ENCODE measurements at regions of chr13 and their contacts with region 1.

Region 1: GRCh38 chr13:107211073-107211472 is 643.1 kb upstream of the ARGLU1 start:
- DNase-seq: peak; percentile 94
- H3K4me3 ChIP-seq: peak overlapping the region; percentile 22
- H3K27ac ChIP-seq: no peak overlapping the region
- H3K4me1 ChIP-seq: no peaks in the 10 kb centered on the region
- H3K27me3 ChIP-seq: no peaks in the 10 kb centered on the region
- CTCF ChIP-seq: peak; percentile 95

Region 2: DNA sequence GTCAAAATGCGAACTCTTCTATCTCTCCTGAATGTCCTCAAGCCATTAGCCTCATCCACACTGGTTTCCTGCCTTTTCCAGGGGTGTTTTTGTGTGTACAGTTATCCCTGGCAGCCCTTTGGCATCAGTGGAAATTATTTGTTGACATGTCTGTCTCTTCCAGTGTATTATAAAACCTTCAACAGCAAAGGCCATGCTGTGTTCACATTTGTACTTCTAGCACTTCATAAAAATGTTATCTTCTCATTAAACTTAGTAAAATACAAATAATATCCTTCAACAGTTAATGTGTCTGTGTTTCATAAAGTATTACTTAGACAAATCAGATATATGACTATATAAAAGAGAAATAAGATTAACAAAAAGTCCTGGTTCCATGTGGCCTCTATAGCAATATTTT is 283.7 kb before region 1 on chr13:
- CTCF ChIA-PET with region 1: no interaction called
- POLR2A ChIA-PET with region 1: no interaction called
- intact Hi-C with region 1: no loop called
- DNase-seq: no peak
- H3K4me3 ChIP-seq: no peak overlapping the region
- H3K27ac ChIP-seq: no peak overlapping the region
- H3K4me1 ChIP-seq: no peaks in the 10 kb centered on the region
- H3K27me3 ChIP-seq: no peaks in the 10 kb centered on the region
- CTCF ChIP-seq: no peak

Region 3: GRCh38 chr13:107130566-107130965 is 80.5 kb before region 1 on chr13:
- CTCF ChIA-PET with region 1: no interaction called
- POLR2A ChIA-PET with region 1: no interaction called
- intact Hi-C with region 1: no loop called
- DNase-seq: no peak
- H3K4me3 ChIP-seq: no peak overlapping the region
- H3K27ac ChIP-seq: no peak overlapping the region
- H3K4me1 ChIP-seq: no peaks in the 10 kb centered on the region
- H3K27me3 ChIP-seq: peaks cover 5% of the 10 kb centered on the region
- CTCF ChIP-seq: no peak

Region 4: DNA sequence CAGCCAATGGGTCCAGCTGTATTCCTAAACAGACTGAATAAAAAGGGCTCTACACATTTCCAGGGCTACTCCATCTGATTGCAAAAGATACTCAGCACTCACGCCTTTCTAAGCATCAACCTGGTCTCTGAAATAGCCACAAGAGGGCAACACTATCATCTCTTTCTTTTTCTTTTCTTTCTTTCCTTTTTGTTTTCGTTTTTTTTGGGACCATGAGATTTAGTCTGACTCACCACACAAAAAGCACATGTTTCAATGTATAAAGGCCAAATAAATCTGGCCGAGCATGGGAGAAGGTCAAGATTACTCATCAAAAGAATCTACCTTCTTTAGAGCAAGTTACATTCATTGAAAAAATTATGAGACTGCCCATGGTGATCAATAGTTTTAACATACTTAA is 162.5 kb after region 1 on chr13:
- CTCF ChIA-PET with region 1: no interaction called
- POLR2A ChIA-PET with region 1: no interaction called
- intact Hi-C with region 1: loop called (anchors 2 kb)
- DNase-seq: peak; percentile 59
- H3K4me3 ChIP-seq: no peak overlapping the region
- H3K27ac ChIP-seq: no peak overlapping the region
- H3K4me1 ChIP-seq: no peaks in the 10 kb centered on the region
- H3K27me3 ChIP-seq: no peaks in the 10 kb centered on the region
- CTCF ChIP-seq: peak; percentile 66

Region 5: DNA sequence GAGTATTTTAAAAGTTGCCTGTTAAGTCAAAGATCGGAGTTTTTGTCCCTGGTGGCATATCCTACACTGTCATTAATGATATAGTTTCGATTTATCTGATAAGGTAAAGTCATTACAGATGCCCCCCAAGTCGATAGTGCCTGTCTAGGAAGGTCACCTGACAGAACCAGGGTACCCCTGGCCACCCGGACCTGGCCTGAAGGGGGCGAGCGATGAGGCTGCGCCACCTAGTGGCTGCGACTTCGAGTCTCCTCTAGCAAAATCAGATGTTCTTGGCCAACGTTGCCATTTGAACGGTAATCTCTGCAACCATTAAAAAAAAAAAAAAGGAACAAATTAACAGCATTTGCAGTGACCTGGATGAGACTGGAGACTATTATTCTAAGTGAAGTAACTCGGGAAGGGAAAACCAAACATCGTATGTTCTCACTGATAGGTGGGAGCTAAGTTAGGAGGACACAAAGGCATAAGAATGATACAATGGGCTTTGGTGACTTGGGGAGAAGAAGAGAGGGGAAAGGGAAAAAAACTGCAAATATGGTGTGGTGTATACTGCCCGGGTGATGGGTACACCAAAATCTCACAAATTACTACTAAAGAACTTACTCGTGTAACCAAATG is 439.1 kb after region 1 on chr13:
- CTCF ChIA-PET with region 1: interaction called, 5 read pairs
- POLR2A ChIA-PET with region 1: no interaction called
- intact Hi-C with region 1: loop called (anchors 1 kb)
- DNase-seq: peak; percentile 64
- H3K4me3 ChIP-seq: no peak overlapping the region
- H3K27ac ChIP-seq: no peak overlapping the region
- H3K4me1 ChIP-seq: no peaks in the 10 kb centered on the region
- H3K27me3 ChIP-seq: no peaks in the 10 kb centered on the region
- CTCF ChIP-seq: peak; percentile 95

Region 6: GRCh38 chr13:108155185-108156106 is 944.4 kb after region 1 on chr13:
- CTCF ChIA-PET with region 1: no interaction called
- POLR2A ChIA-PET with region 1: no interaction called
- intact Hi-C with region 1: loop called (anchors 2 kb)
- DNase-seq: peak; percentile 68
- H3K4me3 ChIP-seq: no peak overlapping the region
- H3K27ac ChIP-seq: no peak overlapping the region
- H3K4me1 ChIP-seq: no peaks in the 10 kb centered on the region
- H3K27me3 ChIP-seq: no peaks in the 10 kb centered on the region
- CTCF ChIP-seq: peak; percentile 91

Measured in A673 (cell line).